ENCODE measurements at regions of chr13 and their contacts with region 1.

Region 1: GRCh38 chr13:39144941-39145533 is 106.8 kb downstream of the NHLRC3 start:
- DNase-seq: peak; percentile 72
- H3K4me3 ChIP-seq: no peak overlapping the region
- H3K27ac ChIP-seq: peak overlapping the region in 1 of 2 donors; percentile 8
- H3K4me1 ChIP-seq: no peaks in the 10 kb centered on the region
- H3K27me3 ChIP-seq: no peaks in the 10 kb centered on the region
- CTCF ChIP-seq: peak; percentile 38 to 75 (median 63)
- POLR2A ChIP-seq: no peak

Region 2: DNA sequence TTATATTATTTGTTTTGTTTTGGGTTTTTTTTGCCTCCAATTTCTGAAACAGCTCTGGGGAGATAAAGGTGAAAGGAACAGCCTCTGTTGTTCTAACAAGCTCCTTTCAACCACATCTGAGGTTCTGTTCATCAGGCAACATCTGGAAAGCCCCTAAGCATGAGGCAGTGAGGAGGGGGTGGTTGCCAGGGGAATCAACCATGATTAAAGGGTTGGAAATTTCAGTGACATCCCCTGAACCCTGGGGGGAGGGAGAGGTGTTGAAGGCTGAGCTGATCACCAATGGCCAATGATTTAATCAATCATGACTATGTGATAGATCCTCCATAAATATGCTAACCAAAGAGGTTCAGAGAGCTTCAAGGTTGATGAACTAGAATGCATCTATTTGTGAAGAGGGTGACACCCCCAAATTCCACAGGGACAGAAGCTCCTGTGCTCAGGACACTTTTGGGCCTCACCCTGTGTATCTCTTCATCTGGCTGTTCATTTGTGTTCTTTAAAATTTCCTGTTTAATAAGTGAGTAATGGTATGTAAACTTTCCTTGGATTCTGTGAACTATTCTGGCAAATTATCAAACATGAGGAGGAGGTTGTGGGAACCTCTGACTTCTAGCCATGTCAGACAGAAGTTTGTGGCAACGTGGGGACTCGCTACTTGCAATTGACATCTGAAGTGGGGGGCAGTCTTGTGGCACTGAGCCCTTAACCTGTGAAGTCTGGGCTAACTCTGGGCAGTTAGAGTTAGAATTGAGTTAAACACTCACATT is 114.5 kb after region 1 on chr13:
- intact Hi-C with region 1: loop called (anchors 10 kb)
- DNase-seq: no peak
- H3K4me3 ChIP-seq: no peak overlapping the region
- H3K27ac ChIP-seq: no peak overlapping the region
- H3K4me1 ChIP-seq: no peaks in the 10 kb centered on the region
- H3K27me3 ChIP-seq: no peaks in the 10 kb centered on the region
- CTCF ChIP-seq: no peak
- POLR2A ChIP-seq: no peak

Region 3: DNA sequence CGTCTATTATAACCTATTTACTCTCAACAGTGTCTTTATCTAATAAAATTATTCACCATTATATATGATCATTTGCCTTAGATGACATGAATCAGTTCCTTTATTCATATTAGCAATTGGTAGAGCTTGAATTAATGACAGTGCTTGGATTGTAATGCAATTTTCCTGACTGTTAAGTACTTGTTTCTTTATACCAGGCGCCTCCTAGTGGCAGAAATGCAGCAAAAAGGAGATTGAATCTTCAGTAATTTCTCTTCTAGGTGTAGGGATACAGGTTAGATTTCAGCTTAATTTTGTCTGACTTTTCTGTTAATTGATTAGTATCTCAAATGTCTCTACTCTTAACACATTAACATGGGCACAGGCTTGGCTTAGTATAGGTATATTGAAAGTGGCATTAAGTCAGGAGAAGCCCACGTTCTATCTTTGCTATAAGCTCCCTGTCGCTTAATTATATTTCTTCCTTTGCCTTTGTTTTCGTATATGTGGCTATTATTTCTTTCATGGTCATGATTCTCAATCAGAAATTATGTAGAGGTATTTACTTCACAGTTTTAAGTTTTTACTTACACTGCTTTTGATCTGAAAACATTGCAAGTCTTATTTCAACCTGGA is 467.1 kb after region 1 on chr13:
- intact Hi-C with region 1: loop called (anchors 5 kb)
- DNase-seq: peak; percentile 94
- H3K4me3 ChIP-seq: no peak overlapping the region
- H3K27ac ChIP-seq: no peak overlapping the region
- H3K4me1 ChIP-seq: no peaks in the 10 kb centered on the region
- H3K27me3 ChIP-seq: no peaks in the 10 kb centered on the region
- CTCF ChIP-seq: peak; percentile 88 to 93 (median 92)
- POLR2A ChIP-seq: no peak

Measured in testis (tissue), 5 donors.